H1 (cell line): ENCODE measurements at regions of chr9 and their contacts with region 1.

Region 1: DNA sequence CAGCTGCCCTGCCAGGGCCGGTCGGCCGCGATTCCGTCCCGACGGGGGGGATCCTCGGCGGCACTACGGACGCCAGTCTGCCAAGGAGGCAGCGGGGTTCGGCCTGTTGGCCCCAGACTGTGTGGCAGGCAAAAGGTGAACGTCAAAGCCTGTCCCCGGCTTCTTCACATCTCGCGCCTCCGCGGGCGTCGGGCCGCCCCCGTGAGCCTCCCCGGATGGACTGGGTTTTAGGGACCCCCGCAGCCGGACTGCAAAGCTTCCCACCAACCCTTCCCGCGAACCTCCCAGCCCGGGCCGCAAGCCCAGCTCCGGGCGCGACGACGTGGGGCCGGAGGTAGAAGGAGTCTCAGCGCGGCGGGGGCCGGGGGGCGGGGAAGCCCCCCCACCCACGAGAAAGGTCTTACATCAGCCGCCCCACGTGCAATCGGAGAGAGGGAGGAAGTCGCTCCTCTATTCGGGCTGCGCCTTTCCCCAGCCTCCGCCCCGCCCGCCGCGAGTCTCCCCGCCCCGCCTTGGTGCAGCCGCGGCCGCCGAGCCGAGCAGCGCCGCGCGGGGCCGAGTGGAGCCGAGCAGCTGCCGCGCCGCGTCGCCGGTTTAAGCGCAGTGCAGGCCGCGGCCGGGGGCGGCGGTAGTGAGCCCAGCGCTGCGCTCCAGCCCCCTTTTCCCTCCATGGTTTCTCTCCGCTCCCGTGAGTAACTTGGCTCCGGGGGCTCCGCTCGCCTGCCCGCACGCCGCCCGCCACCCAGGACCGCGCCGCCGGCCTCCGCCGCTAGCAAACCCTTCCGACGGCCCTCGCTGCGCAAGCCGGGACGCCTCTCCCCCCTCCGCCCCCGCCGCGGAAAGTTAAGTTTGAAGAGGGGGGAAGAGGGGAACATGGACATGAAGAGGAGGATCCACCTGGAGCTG is at the start of gene ANP32B:
- DNase-seq: peak; percentile 46 to 94
- H3K4me3 ChIP-seq: peak within 1 kb of the TSS; percentile 62 to 95 (median 68)
- H3K27ac ChIP-seq: peak within 1 kb of the TSS; percentile 64; the same call in 1 of the 2 replicates
- H3K4me1 ChIP-seq: peaks cover 0 to 7% (median 2%) of the 10 kb centered on the region in 4 experiments; a peak in 2 of 7 replicates
- H3K27me3 ChIP-seq: peaks cover 42 to 75% (median 62%) of the 10 kb centered on the region in 4 experiments
- CTCF ChIP-seq: peak; percentile 80 to 94 (median 86)
- EP300 ChIP-seq: no peak
- POLR2A ChIP-seq: no peak; a peak in 1 of 3 replicates
- RAD21 ChIP-seq: peak in 1 of 2 experiments; percentile 33; a peak in 1 of 4 replicates
- total RNA-seq, gene ANP32B: 77.0 and 88.1 TPM in 2 replicates

Region 2: GRCh38 chr9:97970165-97970564 is 12.8 kb before region 1 on chr9:
- CTCF ChIA-PET with region 1: interaction called, 13 read pairs
- POLR2A ChIA-PET with region 1: interaction called, 4 read pairs
- DNase-seq: no peak
- H3K4me3 ChIP-seq: no peak overlapping the region
- H3K27ac ChIP-seq: no peak overlapping the region
- H3K4me1 ChIP-seq: no peaks in the 10 kb centered on the region
- H3K27me3 ChIP-seq: peaks cover 0 to 21% (median 9%) of the 10 kb centered on the region in 4 experiments; a peak in 4 of 7 replicates
- CTCF ChIP-seq: no peak
- EP300 ChIP-seq: no peak
- POLR2A ChIP-seq: no peak
- RAD21 ChIP-seq: no peak

Region 3: DNA sequence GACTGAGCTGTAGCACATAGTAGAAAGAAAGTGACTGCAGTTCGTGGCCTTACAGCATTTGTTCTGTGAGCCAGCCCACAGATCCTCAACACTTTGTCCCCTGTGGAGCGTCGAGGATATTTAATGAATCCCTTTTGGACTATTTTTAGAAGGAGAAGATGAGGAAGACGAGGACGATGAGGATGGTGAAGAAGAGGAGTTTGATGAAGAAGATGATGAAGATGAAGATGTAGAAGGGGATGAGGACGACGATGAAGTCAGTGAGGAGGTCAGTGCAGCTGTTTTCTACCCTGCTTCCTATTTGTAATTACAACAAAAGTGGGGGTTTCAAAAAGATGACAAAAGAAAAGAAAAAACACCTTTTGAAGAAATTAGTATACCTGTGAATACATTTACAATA is 28.2 kb after region 1 on chr9:
- CTCF ChIA-PET with region 1: no interaction called
- POLR2A ChIA-PET with region 1: no interaction called
- DNase-seq: no peak
- H3K4me3 ChIP-seq: no peak overlapping the region
- H3K27ac ChIP-seq: no peak overlapping the region
- H3K4me1 ChIP-seq: no peaks in the 10 kb centered on the region
- H3K27me3 ChIP-seq: no peaks in the 10 kb centered on the region
- CTCF ChIP-seq: no peak
- EP300 ChIP-seq: no peak
- POLR2A ChIP-seq: no peak
- RAD21 ChIP-seq: no peak